ENCODE measurements at regions of chr16 and their contacts with region 1.

Region 1: GRCh38 chr16:53952215-53953208 is 248.6 kb downstream of the FTO start:
- DNase-seq: no peak
- ATAC-seq: no peak
- H3K4me3 ChIP-seq: no peak overlapping the region
- H3K27ac ChIP-seq: no peak overlapping the region
- H3K4me1 ChIP-seq: peaks cover 10 to 13% of the 10 kb centered on the region in 2 donors
- H3K27me3 ChIP-seq: no peaks in the 10 kb centered on the region
- CTCF ChIP-seq: no peak
- POLR2A ChIP-seq: no peak

Region 2: DNA sequence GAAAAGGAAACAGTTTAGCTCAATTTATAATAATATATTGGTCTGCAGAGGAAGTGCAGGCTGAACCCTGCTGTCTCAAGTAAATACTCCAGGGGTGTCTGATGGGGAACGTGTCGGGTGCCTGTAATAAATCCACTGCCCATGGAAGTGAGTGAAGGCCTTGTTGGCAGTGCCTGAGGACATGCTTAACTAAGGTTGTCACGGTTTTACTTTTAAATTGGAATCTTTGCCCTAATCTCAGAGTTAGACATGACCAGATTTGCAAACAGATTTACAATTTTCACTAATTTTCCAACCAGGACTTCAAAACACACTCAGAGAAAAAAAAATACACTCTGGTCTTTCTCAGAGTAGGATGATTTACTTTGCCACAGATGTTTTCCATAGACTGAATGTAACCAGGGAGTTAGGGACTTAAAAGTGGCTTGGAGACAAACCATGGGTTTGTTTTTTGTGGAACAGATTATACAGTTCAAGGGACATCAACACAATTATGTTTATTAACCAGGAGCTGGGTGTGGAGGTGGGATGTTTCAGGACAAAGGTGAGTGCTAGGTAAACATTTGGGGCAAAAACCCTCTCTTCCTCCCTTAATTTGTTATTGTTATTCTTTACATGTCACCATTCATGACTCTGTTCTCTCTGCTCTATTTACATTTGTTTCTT is 104.1 kb before region 1 on chr16:
- in situ Hi-C with region 1: no loop called
- intact Hi-C with region 1: no loop called
- DNase-seq: no peak
- ATAC-seq: no peak
- H3K4me3 ChIP-seq: no peak overlapping the region
- H3K27ac ChIP-seq: no peak overlapping the region
- H3K4me1 ChIP-seq: peaks cover 7% of the 10 kb centered on the region in 2 donors
- H3K27me3 ChIP-seq: no peaks in the 10 kb centered on the region
- CTCF ChIP-seq: no peak
- POLR2A ChIP-seq: no peak

Region 3: DNA sequence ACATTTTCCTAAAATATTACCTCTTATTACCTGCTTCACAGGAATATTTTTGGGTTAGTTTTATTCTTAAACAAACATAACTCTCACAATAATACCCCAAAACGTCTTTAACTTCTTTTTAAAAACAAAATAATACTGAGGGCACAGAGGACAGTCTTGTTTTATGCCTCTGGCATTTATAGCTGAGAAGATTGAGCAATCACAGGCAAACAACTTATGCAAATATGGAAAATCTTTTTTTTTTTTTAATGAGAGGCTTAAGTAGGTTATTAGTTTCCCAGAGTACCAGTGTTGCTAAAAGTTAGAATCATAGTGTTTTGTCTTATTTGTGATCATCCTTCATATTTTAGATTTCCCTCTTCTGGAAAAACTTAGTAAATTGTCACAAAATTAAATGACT is 53.5 kb before region 1 on chr16:
- in situ Hi-C with region 1: no loop called
- intact Hi-C with region 1: loop called (anchors 5 kb)
- DNase-seq: no peak
- ATAC-seq: no peak
- H3K4me3 ChIP-seq: no peak overlapping the region
- H3K27ac ChIP-seq: no peak overlapping the region
- H3K4me1 ChIP-seq: peaks cover 5 to 9% of the 10 kb centered on the region in 2 donors
- H3K27me3 ChIP-seq: no peaks in the 10 kb centered on the region
- CTCF ChIP-seq: no peak
- POLR2A ChIP-seq: no peak

Region 4: GRCh38 chr16:53968454-53968853 is 15.9 kb after region 1 on chr16:
- in situ Hi-C with region 1: no loop called
- intact Hi-C with region 1: no loop called
- DNase-seq: peak in 1 of 2 donors; percentile 29
- ATAC-seq: peak; percentile 47 to 92
- H3K4me3 ChIP-seq: no peak overlapping the region
- H3K27ac ChIP-seq: peak overlapping the region; percentile 16 to 81 (median 35)
- H3K4me1 ChIP-seq: peaks cover 46 to 53% of the 10 kb centered on the region in 2 donors
- H3K27me3 ChIP-seq: no peaks in the 10 kb centered on the region
- CTCF ChIP-seq: no peak
- POLR2A ChIP-seq: no peak